Heart right ventricle (tissue), 16 donors: ENCODE measurements at regions of chr9 and their contacts with region 1.

Region 1: DNA sequence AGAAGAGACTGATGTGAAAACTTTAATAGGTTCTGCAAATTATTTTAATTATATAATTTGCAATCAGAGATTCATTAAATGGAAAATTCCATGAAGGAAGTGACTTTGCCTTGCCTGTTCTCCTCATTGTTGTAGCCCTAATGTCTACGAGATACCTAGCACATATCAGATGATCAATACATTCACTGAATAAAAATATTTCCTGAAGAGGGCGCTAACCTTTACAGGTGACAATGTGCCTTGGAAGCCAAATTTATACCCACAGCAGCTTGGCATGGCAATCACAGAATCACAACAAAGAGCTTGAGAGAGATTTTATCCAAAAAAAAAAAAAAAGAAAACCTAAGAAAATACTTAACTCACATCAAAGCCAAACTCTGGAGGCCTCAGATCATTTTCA is 17.4 kb downstream of the HAUS6 start:
- DNase-seq: no peak
- ATAC-seq: no peak
- H3K4me3 ChIP-seq: no peak overlapping the region
- H3K27ac ChIP-seq: no peak overlapping the region
- H3K4me1 ChIP-seq: no peaks in the 10 kb centered on the region
- H3K27me3 ChIP-seq: no peaks in the 10 kb centered on the region
- CTCF ChIP-seq: peak in 7 of 9 donors; percentile 7 to 47 (median 38)

Region 2: GRCh38 chr9:19174127-19174912 is 89.0 kb after region 1 on chr9:
- intact Hi-C with region 1: loop called in 2 of 10 experiments (anchors 5 kb)
- DNase-seq: peak; percentile 50 to 64
- ATAC-seq: peak; percentile 72 to 96 (median 86)
- H3K4me3 ChIP-seq: peak overlapping the region in 2 of 10 donors; percentile 2 to 7
- H3K27ac ChIP-seq: peak overlapping the region in 1 of 10 donors; percentile 46
- H3K4me1 ChIP-seq: peaks cover 0 to 30% (median 11%) of the 10 kb centered on the region in 9 donors
- H3K27me3 ChIP-seq: no peaks in the 10 kb centered on the region
- CTCF ChIP-seq: peak; percentile 27 to 80 (median 71)